B cell (primary cell): ENCODE measurements at regions of chr13 and their contacts with region 1.

Region 1: DNA sequence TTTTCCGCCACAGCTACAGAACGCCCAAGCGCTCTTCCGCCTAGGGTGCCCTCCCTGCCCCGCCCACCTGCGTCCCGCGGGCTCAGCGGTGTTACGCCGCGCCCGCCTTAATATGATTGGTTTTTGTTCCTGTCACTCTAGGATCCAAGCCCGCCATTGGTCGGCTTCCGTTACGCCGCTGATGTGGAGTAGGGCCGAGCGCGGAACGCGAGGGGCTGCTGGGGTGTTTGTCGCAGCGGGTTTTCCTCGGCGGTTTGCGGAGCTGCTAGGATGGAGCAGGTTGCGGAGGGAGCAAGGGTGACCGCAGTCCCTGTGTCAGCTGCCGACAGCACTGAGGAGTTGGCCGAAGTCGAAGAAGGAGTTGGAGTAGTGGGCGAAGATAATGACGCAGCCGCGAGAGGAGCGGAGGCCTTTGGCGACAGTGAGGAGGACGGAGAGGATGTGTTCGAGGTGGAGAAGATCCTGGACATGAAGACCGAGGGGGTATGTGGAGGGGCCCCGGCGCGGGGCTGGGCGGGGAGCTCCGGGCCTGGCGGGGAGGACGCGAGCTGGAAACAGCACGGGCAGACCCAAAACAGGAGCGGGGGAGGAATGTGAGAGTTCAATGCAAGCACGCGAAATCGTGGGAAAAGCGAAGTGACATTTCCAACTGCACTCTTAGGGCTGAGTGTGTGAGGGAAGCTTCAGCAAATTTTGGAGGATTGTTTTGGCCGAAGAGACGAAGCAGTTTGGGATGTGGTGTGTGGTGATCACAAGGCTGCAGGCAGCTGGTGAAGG is at the start of gene MPHOSPH8:
- DNase-seq: peak; percentile 98
- ATAC-seq: peak; percentile 97
- H3K4me3 ChIP-seq: peak within 1 kb of the TSS; percentile 84 to 98 (median 88)
- H3K4me3 Mint-ChIP-seq: peak within 1 kb of the TSS; percentile 100
- H3K27ac ChIP-seq: peak within 1 kb of the TSS; percentile 74 to 90
- H3K27ac Mint-ChIP-seq: peak within 1 kb of the TSS; percentile 99
- H3K4me1 ChIP-seq: peaks cover 15 to 25% of the 10 kb centered on the region in 2 donors
- H3K4me1 Mint-ChIP-seq: peaks cover 36% of the 10 kb centered on the region
- H3K27me3 ChIP-seq: no peaks in the 10 kb centered on the region
- H3K27me3 Mint-ChIP-seq: no peaks in the 10 kb centered on the region
- CTCF ChIP-seq: no peak
- total RNA-seq, gene MPHOSPH8: 98.3 and 106 TPM in 2 replicates

Region 2: GRCh38 chr13:19567820-19568534 is 65.7 kb before region 1 on chr13:
- CTCF ChIA-PET with region 1: no interaction called
- POLR2A ChIA-PET with region 1: no interaction called
- intact Hi-C with region 1: loop called (anchors 1 kb)
- DNase-seq: no peak
- ATAC-seq: no peak
- H3K4me3 ChIP-seq: no peak overlapping the region
- H3K4me3 Mint-ChIP-seq: no peak overlapping the region
- H3K27ac ChIP-seq: no peak overlapping the region
- H3K27ac Mint-ChIP-seq: no peak overlapping the region
- H3K4me1 ChIP-seq: peaks cover 0 to 5% of the 10 kb centered on the region in 2 donors
- H3K4me1 Mint-ChIP-seq: peaks cover 16% of the 10 kb centered on the region
- H3K27me3 ChIP-seq: no peaks in the 10 kb centered on the region
- H3K27me3 Mint-ChIP-seq: peaks cover 10% of the 10 kb centered on the region
- CTCF ChIP-seq: no peak

Region 3: DNA sequence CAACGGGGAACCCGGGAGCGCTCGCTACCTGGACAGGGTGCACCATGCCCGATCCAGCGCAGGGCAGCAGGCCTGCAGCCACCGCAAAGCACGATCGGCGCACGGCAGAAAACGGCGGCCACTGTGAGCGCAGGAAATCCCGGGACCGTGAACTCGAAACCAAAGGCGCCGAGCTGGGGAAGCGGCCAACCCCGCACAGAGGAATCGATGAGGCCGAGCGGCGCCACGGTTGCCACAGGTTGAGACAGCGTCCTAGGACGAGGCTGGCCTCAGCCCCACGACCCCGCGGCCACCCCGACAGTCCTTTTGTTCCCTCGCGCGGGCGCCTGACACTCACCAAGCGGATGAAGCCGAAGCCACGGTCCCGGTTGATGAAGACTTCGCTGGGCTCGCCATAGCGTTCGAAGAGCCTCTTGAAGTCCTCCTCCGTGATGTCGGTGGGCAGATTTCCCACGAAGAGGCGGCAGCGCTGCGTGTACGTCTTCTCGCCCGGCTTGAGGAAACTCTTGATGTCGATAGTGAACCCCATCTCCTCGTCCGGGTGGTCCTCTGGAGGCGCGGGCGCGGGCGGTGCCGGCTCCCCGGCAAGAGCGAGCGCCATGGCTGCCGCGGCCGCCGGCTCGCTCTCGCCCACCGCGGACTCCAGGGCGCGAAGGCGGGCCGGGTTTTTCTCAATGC is 148.5 kb after region 1 on chr13:
- CTCF ChIA-PET with region 1: interaction called, 3 read pairs
- POLR2A ChIA-PET with region 1: no interaction called
- intact Hi-C with region 1: loop called (anchors 2 kb)
- DNase-seq: peak; percentile 71
- ATAC-seq: peak; percentile 62
- H3K4me3 ChIP-seq: peak overlapping the region; percentile 91 to 98 (median 98)
- H3K4me3 Mint-ChIP-seq: peak overlapping the region; percentile 98
- H3K27ac ChIP-seq: peak overlapping the region; percentile 88 to 92
- H3K27ac Mint-ChIP-seq: peak overlapping the region; percentile 100
- H3K4me1 ChIP-seq: peaks cover 5 to 10% of the 10 kb centered on the region in 2 donors
- H3K4me1 Mint-ChIP-seq: peaks cover 10% of the 10 kb centered on the region
- H3K27me3 ChIP-seq: no peaks in the 10 kb centered on the region
- H3K27me3 Mint-ChIP-seq: no peaks in the 10 kb centered on the region
- CTCF ChIP-seq: no peak

Region 4: DNA sequence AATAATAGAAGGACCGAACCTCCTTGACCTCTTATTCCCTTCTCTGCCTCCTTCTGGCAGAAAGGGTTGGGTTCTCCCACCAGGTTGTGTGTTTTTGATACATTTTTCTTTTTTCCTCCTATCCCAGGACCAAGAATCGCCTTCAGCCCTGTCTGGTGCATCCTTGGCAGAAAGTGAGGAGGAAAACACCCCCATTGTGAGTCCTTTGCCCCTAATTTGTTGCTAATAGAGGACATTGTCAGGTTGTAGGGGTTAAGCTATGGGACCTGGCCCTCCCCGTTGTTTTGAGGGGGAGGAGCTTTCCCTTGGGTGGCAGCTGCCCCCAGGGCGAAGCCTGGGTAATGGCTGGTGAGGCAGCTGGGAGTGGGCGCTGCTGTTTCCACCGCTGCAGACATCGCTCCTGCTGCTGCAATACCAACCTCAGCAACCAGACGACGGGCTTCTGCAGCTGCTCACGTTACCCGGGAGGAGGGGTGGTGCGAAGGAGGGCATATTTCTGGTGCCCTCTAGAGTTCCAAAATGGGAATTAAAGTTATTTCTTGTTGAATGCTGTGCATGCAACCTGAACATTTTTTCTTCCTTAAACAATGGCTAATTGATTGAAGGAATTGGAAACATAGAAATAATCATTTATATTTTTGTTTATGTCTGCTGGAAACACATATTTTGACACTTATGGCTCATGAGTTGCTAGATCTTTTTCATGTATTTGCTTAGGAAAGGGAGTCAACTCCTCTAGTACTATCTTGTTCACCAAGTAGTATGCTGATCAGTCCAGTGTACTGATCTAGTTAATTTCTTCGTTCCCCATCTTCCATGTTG is 326.4 kb after region 1 on chr13:
- CTCF ChIA-PET with region 1: interaction called, 4 read pairs
- POLR2A ChIA-PET with region 1: no interaction called
- intact Hi-C with region 1: loop called (anchors 1 kb)
- DNase-seq: peak; percentile 92
- ATAC-seq: peak; percentile 44
- H3K4me3 ChIP-seq: peak overlapping the region; percentile 78 to 90 (median 85)
- H3K4me3 Mint-ChIP-seq: peak overlapping the region; percentile 99
- H3K27ac ChIP-seq: peak overlapping the region; percentile 90 to 96
- H3K27ac Mint-ChIP-seq: peak overlapping the region; percentile 99
- H3K4me1 ChIP-seq: peaks cover 8 to 15% of the 10 kb centered on the region in 2 donors
- H3K4me1 Mint-ChIP-seq: peaks cover 31% of the 10 kb centered on the region
- H3K27me3 ChIP-seq: no peaks in the 10 kb centered on the region
- H3K27me3 Mint-ChIP-seq: no peaks in the 10 kb centered on the region
- CTCF ChIP-seq: peak; percentile 87

Region 5: GRCh38 chr13:21297914-21298831 is 1664.5 kb after region 1 on chr13:
- CTCF ChIA-PET with region 1: no interaction called
- POLR2A ChIA-PET with region 1: no interaction called
- intact Hi-C with region 1: loop called (anchors 5 kb)
- DNase-seq: peak; percentile 93
- ATAC-seq: peak; percentile 96
- H3K4me3 ChIP-seq: peak overlapping the region; percentile 8 to 88 (median 75)
- H3K4me3 Mint-ChIP-seq: peak overlapping the region; percentile 89
- H3K27ac ChIP-seq: peak overlapping the region; percentile 7 to 77
- H3K27ac Mint-ChIP-seq: peak overlapping the region; percentile 89
- H3K4me1 ChIP-seq: peaks cover 15 to 18% of the 10 kb centered on the region in 2 donors
- H3K4me1 Mint-ChIP-seq: peaks cover 17% of the 10 kb centered on the region
- H3K27me3 ChIP-seq: no peaks in the 10 kb centered on the region
- H3K27me3 Mint-ChIP-seq: no peaks in the 10 kb centered on the region
- CTCF ChIP-seq: peak; percentile 93